T-cell (primary cell): ENCODE measurements at regions of chr17 and their contacts with region 1.

Region 1: GRCh38 chr17:59155439-59156182 is at the start of gene PRR11:
- DNase-seq: peak in 31 of 35 experiments; percentile 72 to 98 (median 93)
- ATAC-seq: peak; percentile 86 to 91 (median 89)
- H3K4me3 ChIP-seq: peak within 1 kb of the TSS; percentile 92 to 99
- H3K4me3 Mint-ChIP-seq: no peak within 1 kb of the TSS
- H3K27ac ChIP-seq: peak within 1 kb of the TSS; percentile 62
- H3K27ac Mint-ChIP-seq: no peak within 1 kb of the TSS
- H3K4me1 ChIP-seq: peaks cover 22 to 27% of the 10 kb centered on the region in 2 experiments
- H3K4me1 Mint-ChIP-seq: peaks cover 7 to 49% (median 37%) of the 10 kb centered on the region in 3 donors
- H3K27me3 ChIP-seq: no peaks in the 10 kb centered on the region
- H3K27me3 Mint-ChIP-seq: no peaks in the 10 kb centered on the region
- total RNA-seq, gene PRR11: 1.1 to 3.3 (median 1.8) TPM

Region 2: DNA sequence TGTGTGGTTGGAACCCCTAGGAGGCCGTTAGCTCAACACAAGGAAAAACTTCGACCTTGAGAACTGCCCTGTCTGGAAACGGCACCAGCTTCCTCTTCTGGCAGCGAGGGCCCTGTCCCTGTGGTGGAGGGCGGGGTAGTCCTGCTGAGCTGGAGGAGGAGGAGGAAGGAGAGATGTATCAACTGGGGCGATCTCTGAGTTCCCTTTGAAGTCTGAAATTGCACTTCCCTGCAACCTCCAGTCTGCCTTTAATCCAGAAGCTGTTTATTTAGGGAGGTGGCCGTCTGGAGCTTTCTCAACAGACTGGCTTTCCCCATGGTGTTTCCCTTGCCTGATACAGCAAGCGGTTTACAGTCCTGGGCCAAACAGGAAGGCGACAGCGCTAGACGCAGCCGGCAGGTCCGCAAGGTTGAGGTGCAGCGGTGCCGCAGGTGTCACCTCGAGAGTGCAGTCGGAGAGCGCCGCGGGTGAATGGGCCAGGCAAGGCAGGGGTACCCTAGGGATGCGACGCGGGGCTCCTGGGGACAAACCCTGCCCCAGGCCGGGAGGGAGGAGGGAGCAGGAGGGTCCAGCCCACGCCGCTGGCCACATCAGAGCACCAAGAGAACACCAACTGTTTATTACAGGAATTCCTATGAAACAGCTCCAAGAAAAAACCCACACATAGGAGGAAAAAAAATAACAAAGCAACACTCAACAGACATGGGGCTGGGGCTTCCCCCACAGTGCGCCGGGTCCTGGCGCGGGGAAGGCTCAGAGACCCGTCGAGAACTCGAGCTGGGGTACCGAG is 1294.4 kb before region 1 on chr17:
- CTCF ChIA-PET with region 1: no interaction called
- POLR2A ChIA-PET with region 1: interaction called in 1 of 2 experiments, 14 read pairs
- DNase-seq: peak in 24 of 35 experiments; percentile 13 to 57 (median 30)
- ATAC-seq: peak; percentile 72 to 83 (median 81)
- H3K4me3 ChIP-seq: peak overlapping the region; percentile 35 to 80
- H3K4me3 Mint-ChIP-seq: peak overlapping the region; percentile 76 to 87 (median 77)
- H3K27ac ChIP-seq: no peak overlapping the region
- H3K27ac Mint-ChIP-seq: peak overlapping the region in 1 of 2 donors; percentile 39
- H3K4me1 ChIP-seq: peaks cover 8 to 20% of the 10 kb centered on the region in 2 experiments
- H3K4me1 Mint-ChIP-seq: peaks cover 10 to 14% (median 11%) of the 10 kb centered on the region in 3 donors
- H3K27me3 ChIP-seq: peaks cover 0 to 51% of the 10 kb centered on the region in 2 experiments
- H3K27me3 Mint-ChIP-seq: peaks cover 6 to 17% of the 10 kb centered on the region in 2 donors

Region 3: GRCh38 chr17:59106463-59107305 is 48.9 kb before region 1 on chr17 and contains the start of gene TRIM37:
- CTCF ChIA-PET with region 1: interaction called in 1 of 2 experiments, 18 read pairs
- POLR2A ChIA-PET with region 1: interaction called in 1 of 2 experiments, 4 read pairs
- DNase-seq: peak; percentile 96 to 100 (median 98)
- ATAC-seq: peak; percentile 94 to 98 (median 96)
- H3K4me3 ChIP-seq: peak within 1 kb of the TSS; percentile 78 to 98
- H3K4me3 Mint-ChIP-seq: peak within 1 kb of the TSS; percentile 94 to 96 (median 94)
- H3K27ac ChIP-seq: peak within 1 kb of the TSS; percentile 87
- H3K27ac Mint-ChIP-seq: peak within 1 kb of the TSS; percentile 87 to 91
- H3K4me1 ChIP-seq: peaks cover 14% of the 10 kb centered on the region in 2 experiments
- H3K4me1 Mint-ChIP-seq: peaks cover 35 to 44% (median 41%) of the 10 kb centered on the region in 3 donors
- H3K27me3 ChIP-seq: no peaks in the 10 kb centered on the region
- H3K27me3 Mint-ChIP-seq: no peaks in the 10 kb centered on the region
- total RNA-seq, gene TRIM37: 17.9 to 26.4 (median 24.1) TPM